AG04449 (cell line): ENCODE measurements at regions of chr14 and their contacts with region 1.

Region 1: GRCh38 chr14:53432378-53432802 is 279.3 kb upstream of the DDHD1 start:
- DNase-seq: no peak
- H3K4me3 ChIP-seq: no peak overlapping the region
- CTCF ChIP-seq: peak; percentile 74

Region 2: DNA sequence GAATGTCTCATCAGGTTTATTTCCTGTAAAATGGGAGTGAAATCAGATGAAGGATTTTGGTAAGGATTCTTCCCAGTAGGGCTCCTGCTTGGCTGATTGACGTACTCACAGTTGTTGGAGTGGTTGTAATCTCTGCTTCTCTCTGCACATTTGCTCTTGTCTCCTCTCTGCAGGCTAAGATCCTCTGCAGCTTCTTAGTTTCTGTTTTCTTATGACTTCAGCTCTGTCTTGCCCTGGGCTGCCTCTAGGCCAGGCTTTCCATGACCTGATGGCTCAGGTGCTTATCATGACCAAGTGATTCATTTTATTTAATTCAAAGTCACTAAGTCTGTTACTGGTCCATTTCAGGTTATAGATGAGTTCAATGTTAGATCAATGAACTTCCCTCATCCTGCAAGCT is 115.2 kb after region 1 on chr14:
- CTCF ChIA-PET with region 1: no interaction called
- POLR2A ChIA-PET with region 1: no interaction called
- DNase-seq: no peak
- H3K4me3 ChIP-seq: no peak overlapping the region
- CTCF ChIP-seq: no peak

Region 3: DNA sequence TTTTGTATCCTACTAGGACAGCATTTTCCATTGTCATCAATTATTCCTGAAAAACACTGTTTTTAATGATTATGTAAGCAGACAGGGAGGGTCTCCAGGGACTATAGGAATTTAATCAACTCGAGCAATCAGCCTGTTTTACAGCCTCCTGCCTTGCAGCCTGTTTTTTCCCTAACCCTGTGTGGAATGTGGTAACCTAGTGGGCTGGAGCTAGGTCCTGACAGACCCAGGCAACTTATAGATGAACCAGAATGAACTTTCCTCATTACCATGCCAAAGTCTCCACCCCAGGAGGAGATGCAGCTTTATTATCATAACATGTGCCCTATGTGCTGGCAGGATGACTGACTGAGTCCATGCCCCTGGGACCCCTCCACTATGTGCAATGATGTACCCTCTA is 149.1 kb after region 1 on chr14:
- CTCF ChIA-PET with region 1: no interaction called
- POLR2A ChIA-PET with region 1: no interaction called
- DNase-seq: no peak
- H3K4me3 ChIP-seq: no peak overlapping the region
- CTCF ChIP-seq: no peak

Region 4: DNA sequence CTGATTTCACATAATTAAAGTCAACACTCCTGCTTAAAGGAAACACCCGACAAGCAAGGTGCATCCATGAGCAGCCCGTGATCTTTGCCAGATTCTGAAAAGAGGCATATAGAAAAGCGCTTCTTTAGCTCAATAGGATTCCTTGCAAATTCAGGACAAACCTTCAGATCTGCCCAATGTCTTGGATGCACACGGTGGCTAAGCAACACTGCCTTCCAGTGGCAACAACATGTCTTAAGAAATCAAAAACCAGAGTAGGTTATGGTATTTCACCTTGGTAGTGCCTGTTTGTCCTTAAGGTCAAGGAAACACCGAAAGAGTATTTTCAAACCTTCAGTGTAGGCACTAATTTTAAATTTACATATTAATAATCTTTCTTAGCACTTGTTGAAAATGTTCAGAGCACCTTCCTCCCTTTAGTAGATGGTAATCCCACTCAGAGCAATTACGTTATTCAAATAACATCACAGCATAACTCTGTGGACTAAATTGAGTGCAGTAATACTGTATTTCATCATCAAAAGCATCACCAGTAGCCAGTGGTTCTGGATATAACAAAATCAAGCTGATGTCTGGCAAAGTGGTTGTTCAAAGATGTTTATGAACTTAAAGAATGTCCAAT is 906.4 kb after region 1 on chr14:
- CTCF ChIA-PET with region 1: interaction called, 18 read pairs
- POLR2A ChIA-PET with region 1: no interaction called
- DNase-seq: no peak
- H3K4me3 ChIP-seq: no peak overlapping the region
- CTCF ChIP-seq: peak; percentile 59